CD8-positive, alpha-beta T cell (primary cell): ENCODE measurements at regions of chrX and their contacts with region 1.

Region 1: GRCh38 chrX:81174286-81174685 is 27.4 kb downstream of the HMGN5 start:
- DNase-seq: peak in 2 of 9 experiments; percentile 13 to 29
- ATAC-seq: no peak
- H3K4me3 ChIP-seq: no peak overlapping the region
- H3K4me3 Mint-ChIP-seq: no peak overlapping the region
- H3K27ac ChIP-seq: no peak overlapping the region
- H3K27ac Mint-ChIP-seq: no peak overlapping the region
- H3K4me1 ChIP-seq: no peaks in the 10 kb centered on the region
- H3K4me1 Mint-ChIP-seq: peaks cover 2% of the 10 kb centered on the region
- H3K27me3 ChIP-seq: no peaks in the 10 kb centered on the region
- H3K27me3 Mint-ChIP-seq: no peaks in the 10 kb centered on the region
- CTCF ChIP-seq: no peak

Region 2: DNA sequence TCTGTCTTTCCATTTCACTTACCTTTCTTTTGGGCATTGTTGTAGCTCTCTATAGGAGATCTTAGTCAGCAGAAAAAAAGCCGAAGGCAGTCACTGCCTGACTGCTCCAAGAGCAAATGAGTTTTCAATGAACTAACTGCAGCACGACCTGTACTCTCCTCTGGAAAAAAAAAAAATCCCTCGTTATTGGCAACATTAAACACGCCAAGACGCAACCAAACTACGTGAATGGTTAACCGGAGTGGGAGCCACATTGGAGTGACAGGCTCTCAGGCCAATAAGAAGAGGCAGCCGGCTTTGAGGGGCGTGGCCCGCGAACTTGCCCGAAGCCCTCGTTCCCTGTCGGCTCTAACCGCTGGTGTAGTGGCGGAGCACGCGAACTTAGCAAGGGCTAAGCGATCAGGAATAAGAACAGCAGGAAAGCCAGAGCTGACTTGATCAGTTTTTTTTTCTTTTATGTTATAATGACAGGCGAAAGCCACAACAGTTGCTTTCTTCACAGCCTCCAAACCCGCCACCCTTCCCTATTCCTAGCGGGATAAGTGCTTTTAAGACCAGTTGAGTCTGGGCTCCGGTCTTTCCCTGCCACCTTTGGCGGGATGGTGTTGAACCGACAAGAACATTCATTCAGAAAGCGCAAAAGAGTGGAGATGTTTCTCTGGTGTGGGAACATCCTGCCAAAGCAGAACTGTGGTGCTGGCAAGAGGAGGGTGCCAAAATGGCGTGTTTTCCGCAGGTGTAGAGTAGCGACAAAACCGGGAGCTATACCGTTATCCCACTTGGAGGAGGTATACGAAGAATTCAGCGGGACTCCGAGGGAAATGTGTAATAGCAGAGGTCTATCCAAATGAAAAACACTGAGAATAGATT is 52.5 kb before region 1 on chrX:
- CTCF ChIA-PET with region 1: no interaction called
- POLR2A ChIA-PET with region 1: no interaction called
- intact Hi-C with region 1: no loop called
- DNase-seq: peak; percentile 71 to 91 (median 84)
- ATAC-seq: peak; percentile 94
- H3K4me3 ChIP-seq: peak overlapping the region; percentile 71 to 82
- H3K4me3 Mint-ChIP-seq: peak overlapping the region; percentile 93
- H3K27ac ChIP-seq: peak overlapping the region in 1 of 2 experiments; percentile 39
- H3K27ac Mint-ChIP-seq: peak overlapping the region; percentile 46
- H3K4me1 ChIP-seq: peaks cover 4% of the 10 kb centered on the region
- H3K4me1 Mint-ChIP-seq: peaks cover 9% of the 10 kb centered on the region
- H3K27me3 ChIP-seq: no peaks in the 10 kb centered on the region
- H3K27me3 Mint-ChIP-seq: no peaks in the 10 kb centered on the region
- CTCF ChIP-seq: no peak

Region 3: GRCh38 chrX:81280148-81280547 is 105.9 kb after region 1 on chrX:
- CTCF ChIA-PET with region 1: no interaction called
- POLR2A ChIA-PET with region 1: no interaction called
- intact Hi-C with region 1: no loop called
- DNase-seq: no peak
- ATAC-seq: no peak
- H3K4me3 ChIP-seq: no peak overlapping the region
- H3K4me3 Mint-ChIP-seq: no peak overlapping the region
- H3K27ac ChIP-seq: no peak overlapping the region
- H3K27ac Mint-ChIP-seq: no peak overlapping the region
- H3K4me1 ChIP-seq: no peaks in the 10 kb centered on the region
- H3K4me1 Mint-ChIP-seq: peaks cover under 1% of the 10 kb centered on the region
- H3K27me3 ChIP-seq: no peaks in the 10 kb centered on the region
- H3K27me3 Mint-ChIP-seq: no peaks in the 10 kb centered on the region
- CTCF ChIP-seq: no peak

Region 4: GRCh38 chrX:81336455-81337152 is 162.3 kb after region 1 on chrX:
- CTCF ChIA-PET with region 1: no interaction called
- POLR2A ChIA-PET with region 1: no interaction called
- intact Hi-C with region 1: no loop called
- DNase-seq: no peak
- ATAC-seq: no peak
- H3K4me3 ChIP-seq: no peak overlapping the region
- H3K4me3 Mint-ChIP-seq: no peak overlapping the region
- H3K27ac ChIP-seq: no peak overlapping the region
- H3K27ac Mint-ChIP-seq: no peak overlapping the region
- H3K4me1 ChIP-seq: no peaks in the 10 kb centered on the region
- H3K4me1 Mint-ChIP-seq: no peaks in the 10 kb centered on the region
- H3K27me3 ChIP-seq: no peaks in the 10 kb centered on the region
- H3K27me3 Mint-ChIP-seq: no peaks in the 10 kb centered on the region
- CTCF ChIP-seq: no peak

Region 5: GRCh38 chrX:81377329-81377728 is 203.0 kb after region 1 on chrX:
- CTCF ChIA-PET with region 1: interaction called, 3 read pairs
- POLR2A ChIA-PET with region 1: no interaction called
- intact Hi-C with region 1: loop called in 1 of 2 experiments (anchors 2 kb)
- DNase-seq: peak in 2 of 9 experiments; percentile 11 to 13
- ATAC-seq: no peak
- H3K4me3 ChIP-seq: no peak overlapping the region
- H3K4me3 Mint-ChIP-seq: no peak overlapping the region
- H3K27ac ChIP-seq: no peak overlapping the region
- H3K27ac Mint-ChIP-seq: no peak overlapping the region
- H3K4me1 ChIP-seq: no peaks in the 10 kb centered on the region
- H3K4me1 Mint-ChIP-seq: no peaks in the 10 kb centered on the region
- H3K27me3 ChIP-seq: no peaks in the 10 kb centered on the region
- H3K27me3 Mint-ChIP-seq: peaks cover 7% of the 10 kb centered on the region
- CTCF ChIP-seq: peak; percentile 38